ENCODE measurements at regions of chr18 and their contacts with region 1.

Region 1: GRCh38 chr18:24530630-24531111 is 70.2 kb downstream of the HRH4 start:
- DNase-seq: no peak
- ATAC-seq: no peak

Region 2: DNA sequence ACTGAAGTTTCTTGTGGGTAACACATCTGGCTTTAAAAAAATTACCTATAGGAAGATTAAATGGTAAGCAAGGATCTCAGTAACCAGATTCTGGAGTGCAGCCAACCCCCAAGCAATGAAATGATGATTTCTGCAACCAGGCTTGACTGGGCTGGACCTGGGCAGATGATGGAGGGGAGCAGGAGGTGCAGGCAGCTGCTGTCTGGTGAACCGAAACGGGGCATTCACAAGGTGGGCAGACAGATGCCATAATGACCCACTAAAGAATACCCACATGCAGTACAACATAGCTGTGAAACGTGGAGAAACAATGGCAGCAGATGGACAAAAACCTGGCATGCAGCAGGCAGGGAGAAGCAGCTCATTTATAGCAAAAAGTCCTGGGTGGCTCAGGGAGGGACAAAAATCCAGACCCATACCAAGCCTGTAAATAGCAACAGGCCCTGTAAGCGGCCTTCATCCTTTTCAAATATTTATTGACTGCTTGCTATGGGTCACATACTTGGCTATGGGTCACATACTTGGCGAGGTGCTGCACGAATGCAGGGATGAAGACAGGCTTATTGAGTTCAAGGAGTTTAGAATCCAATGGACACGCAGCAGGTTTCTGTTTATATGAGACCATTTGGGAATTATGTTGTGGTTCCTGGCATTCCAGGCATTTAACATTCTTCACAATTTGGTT is 174.4 kb after region 1 on chr18:
- intact Hi-C with region 1: loop called in 1 of 2 experiments (anchors 10 kb)
- DNase-seq: no peak
- ATAC-seq: no peak